ENCODE measurements at regions of chr17 and their contacts with region 1.

Region 1: GRCh38 chr17:44522883-44523671 is 19.9 kb upstream of the GPATCH8 start:
- DNase-seq: peak; percentile 76
- CTCF ChIP-seq: peak; percentile 73

Region 2: DNA sequence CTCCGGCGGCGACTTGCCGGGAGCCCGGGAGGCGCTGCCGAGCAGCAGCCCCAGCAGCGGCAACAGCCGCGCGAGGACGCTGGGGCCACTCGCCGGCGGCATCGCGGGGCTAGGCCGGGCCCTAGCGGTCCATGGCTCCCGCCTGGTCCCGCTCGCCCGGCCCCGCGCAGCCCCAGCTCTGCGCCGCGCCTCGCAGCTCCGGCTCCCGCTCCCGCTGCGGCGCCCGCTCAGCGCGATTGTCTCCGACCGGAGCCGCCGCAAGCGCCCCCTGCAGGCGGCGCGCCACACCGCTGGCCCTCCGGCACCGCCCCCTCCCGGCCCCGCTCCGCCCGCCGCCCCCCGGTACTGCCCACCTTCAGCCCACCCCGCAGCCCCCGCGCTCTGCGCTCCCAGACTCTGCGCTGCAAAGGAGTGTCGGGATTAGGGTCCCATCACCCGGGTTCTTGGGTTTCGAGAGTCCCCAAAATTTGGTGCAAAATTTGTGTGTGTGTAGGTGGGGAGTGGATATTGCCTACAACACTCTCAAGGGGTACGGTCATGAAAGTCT is 159.4 kb before region 1 on chr17 and contains the start of gene FAM171A2:
- CTCF ChIA-PET with region 1: interaction called, 16 read pairs
- POLR2A ChIA-PET with region 1: no interaction called
- DNase-seq: peak; percentile 90
- CTCF ChIP-seq: peak; percentile 67

Region 3: DNA sequence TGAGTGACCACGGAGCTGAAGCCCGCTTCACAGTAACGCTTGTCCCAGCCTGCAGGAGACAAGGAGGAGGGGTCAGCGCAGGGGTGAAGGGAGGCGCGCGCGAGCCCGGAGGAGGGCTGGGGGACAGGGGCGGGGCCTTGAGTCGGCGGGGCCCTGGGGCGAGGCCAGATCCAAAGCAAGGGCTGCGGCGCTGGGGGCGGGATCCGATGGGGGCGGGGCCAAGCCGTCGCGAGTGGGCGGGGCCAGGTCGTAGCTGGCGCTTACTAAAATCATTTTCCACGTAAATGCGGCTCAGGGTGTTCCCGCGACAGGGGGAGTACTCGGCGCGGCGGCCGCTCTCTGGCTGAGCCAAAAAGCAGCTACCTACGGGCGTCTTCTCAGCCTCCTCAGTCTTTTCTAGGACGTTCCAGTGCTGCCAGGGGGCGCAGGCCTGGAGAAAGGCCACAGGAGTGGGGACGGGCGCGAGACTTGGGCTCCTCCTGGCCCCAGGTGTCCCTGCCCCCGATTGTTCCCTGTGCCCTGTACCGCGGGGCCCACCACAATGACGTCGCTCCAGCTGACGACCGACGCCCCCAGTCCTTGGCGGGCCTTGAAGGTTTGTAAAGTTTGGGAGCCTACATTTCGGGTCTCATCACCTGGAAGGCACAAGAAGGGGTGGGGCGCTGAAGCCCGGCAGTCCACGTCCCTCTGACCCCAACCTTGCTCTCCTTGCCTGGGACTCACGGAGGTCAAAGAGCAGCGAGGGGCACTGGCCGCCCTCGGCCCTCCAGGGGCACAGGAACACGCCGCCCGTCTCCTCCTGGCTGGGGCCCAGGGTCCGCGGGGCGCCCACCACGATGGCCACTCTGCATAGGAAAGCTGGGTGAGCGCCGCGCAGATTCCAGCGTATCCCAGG is 137.5 kb before region 1 on chr17:
- CTCF ChIA-PET with region 1: interaction called, 15 read pairs
- POLR2A ChIA-PET with region 1: no interaction called
- DNase-seq: peak; percentile 93
- CTCF ChIP-seq: peak; percentile 4

Region 4: DNA sequence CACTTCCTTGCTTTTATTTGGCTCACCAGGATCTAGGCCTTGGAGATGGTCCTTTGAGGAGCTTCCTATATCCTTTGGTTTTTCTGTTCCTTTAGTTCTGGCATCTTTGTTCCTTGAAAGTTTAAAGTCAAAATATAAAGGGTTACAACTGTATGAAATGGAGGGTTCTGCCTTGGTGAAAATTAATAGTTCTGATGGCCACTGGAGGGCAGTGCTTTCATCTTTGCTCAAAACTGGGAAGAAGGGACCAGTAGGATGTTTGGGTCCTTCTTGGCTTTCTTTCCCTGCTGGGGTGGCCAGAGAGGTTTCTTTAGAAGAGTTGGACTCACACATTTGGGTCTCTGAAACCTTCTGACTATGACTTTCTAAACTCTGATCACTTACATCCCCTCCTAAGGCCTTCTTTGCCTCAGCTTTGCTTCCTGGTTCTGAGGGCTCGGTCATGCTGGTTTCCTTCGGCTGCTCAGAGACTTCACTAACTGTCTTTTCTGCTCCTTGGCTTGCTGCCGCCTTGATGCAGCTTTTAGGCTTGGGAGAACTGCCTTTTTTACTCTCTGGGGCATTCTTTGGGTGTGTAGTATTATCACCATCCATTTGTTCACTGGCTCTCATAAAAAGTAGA is 122.7 kb before region 1 on chr17:
- CTCF ChIA-PET with region 1: interaction called, 72 read pairs
- POLR2A ChIA-PET with region 1: no interaction called
- DNase-seq: no peak
- CTCF ChIP-seq: peak; percentile 62

Region 5: DNA sequence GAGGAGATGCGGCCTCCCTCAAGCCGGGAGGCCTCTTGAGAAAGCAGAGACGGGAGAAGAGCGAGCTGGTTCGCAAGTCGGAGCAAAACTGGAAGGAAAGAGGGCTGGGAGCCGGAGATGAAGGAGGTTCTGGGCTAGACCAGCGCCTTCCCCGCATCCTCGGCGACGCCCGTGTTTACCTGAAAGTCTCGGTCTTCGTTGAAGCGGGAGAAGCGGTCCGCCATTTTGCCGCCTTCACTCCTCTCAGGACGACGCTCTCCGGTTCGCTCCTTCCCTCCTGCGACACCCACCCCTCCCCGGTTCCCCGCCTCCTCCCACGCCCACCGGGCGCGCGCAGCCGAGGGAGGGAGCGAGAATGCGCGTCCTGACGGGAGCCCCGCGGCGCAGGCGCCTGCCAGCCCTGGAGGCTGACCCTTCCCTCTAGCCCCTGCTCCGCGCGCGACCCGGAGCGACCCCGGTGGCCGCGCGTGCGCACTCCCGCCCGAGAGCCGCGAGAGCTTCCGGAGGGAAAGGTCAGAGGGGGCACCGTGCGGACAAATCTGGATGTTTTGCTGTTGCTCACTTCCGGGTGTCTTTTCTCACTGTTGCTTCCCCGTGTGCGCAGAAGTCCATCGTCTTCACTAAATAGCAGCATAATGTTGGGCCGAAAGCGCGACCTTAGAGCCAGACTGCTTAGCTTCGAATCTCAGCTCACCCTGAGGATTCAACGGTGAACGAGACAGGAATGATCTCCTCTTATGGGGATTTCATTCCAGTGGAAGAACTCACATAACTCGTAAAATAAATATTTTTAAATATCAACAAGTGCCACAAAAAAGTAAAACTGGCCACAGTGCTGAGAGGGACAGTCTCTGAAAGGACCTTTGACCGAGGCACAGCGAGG is 19.7 kb before region 1 on chr17 and contains the start of gene GPATCH8:
- CTCF ChIA-PET with region 1: interaction called, 22 read pairs
- POLR2A ChIA-PET with region 1: no interaction called
- DNase-seq: peak; percentile 100
- CTCF ChIP-seq: no peak

Region 6: GRCh38 chr17:44533533-44534246 is 10.6 kb after region 1 on chr17:
- CTCF ChIA-PET with region 1: interaction called, 60 read pairs
- POLR2A ChIA-PET with region 1: no interaction called
- DNase-seq: peak; percentile 91
- CTCF ChIP-seq: peak; percentile 96

Region 7: GRCh38 chr17:44543213-44543904 is 20.3 kb after region 1 on chr17:
- CTCF ChIA-PET with region 1: interaction called, 14 read pairs
- POLR2A ChIA-PET with region 1: no interaction called
- DNase-seq: no peak
- CTCF ChIP-seq: no peak